Esophagus muscularis mucosa (tissue), 4 donors: ENCODE measurements at regions of chr10 and their contacts with region 1.

Region 1: GRCh38 chr10:73263948-73264347 is 11.5 kb upstream of the MRPS16 start:
- DNase-seq: no peak
- H3K4me3 ChIP-seq: no peak overlapping the region
- H3K27ac ChIP-seq: no peak overlapping the region
- H3K4me1 ChIP-seq: no peaks in the 10 kb centered on the region
- H3K27me3 ChIP-seq: no peaks in the 10 kb centered on the region
- CTCF ChIP-seq: peak; percentile 28 to 38 (median 36)
- EP300 ChIP-seq: no peak
- POLR2A ChIP-seq: no peak

Region 2: DNA sequence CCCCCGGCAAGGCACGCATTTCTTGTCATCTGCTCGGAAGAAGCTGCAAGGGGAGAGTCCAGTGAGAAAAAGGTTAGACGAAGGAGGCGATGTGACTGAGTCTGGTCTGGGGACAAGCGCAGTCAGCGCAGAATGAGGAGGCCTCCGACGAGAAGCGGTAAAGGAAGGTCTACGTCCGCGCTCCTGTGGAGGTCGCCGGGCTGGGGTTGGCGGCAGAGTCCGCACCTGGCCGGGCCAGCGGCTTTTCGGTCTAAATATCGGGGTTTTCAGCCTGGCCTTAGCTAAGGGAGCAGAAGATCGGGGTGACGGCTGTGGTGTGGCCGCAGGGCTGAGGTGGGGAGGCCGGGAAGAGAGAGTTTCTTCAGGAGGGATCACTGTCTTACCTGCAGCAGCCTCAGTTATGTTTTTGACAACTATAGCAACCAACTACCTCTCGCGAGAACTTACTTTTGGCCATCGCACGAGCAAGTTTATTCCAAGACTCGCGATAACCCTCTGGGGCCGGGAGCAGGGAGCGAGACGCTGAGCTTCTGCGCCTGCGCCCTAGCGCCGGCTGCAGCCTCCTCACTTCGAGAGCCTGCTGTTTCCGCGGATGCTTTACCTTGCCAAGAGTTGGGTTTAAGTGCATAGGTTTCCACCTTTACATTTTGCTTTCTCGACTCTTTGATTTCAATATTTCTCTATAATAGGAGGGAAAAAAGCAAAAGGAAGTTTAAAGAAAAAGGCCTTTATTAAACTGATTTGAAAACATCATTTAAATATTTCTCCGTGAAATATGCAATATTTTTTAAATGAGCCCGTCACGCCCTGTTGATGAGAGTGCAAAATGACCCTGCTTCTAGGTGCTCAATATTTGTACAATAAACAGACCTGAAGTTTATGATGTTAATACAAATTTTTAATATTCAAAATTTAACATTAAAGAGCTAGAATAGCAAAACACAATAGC is 94.7 kb after region 1 on chr10 and contains the start of gene CFAP70:
- intact Hi-C with region 1: loop called (anchors 5 kb)
- DNase-seq: peak; percentile 94
- H3K4me3 ChIP-seq: peak within 1 kb of the TSS; percentile 66 to 95 (median 78)
- H3K27ac ChIP-seq: peak within 1 kb of the TSS; percentile 61 to 75 (median 74)
- H3K4me1 ChIP-seq: peaks cover 5 to 17% (median 15%) of the 10 kb centered on the region in 4 donors
- H3K27me3 ChIP-seq: no peaks in the 10 kb centered on the region
- CTCF ChIP-seq: peak in 1 of 3 experiments; percentile 37
- EP300 ChIP-seq: no peak
- POLR2A ChIP-seq: no peak
- total RNA-seq, gene CFAP70: 0.99 to 3.3 (median 1.1) TPM

Region 3: DNA sequence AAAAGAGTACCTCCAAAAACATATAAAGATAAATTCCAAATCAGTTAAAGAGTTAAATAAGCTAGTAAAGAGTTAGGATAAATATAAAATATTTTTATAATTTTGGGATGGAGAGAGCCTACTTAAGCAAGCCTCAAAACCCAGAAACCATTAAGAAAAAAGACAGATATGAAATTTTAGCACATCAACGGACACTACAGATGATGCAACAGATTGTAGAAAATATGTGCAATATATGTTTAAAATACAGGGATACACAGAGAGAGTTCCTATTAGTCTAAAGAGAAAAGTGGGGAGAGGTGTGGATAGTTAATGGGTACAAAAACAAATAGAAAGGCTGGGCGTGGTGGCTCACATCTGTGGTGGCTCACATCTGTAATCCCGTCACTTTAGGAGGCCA is 350.8 kb after region 1 on chr10:
- intact Hi-C with region 1: no loop called
- DNase-seq: no peak
- H3K4me3 ChIP-seq: no peak overlapping the region
- H3K27ac ChIP-seq: no peak overlapping the region
- H3K4me1 ChIP-seq: no peaks in the 10 kb centered on the region
- H3K27me3 ChIP-seq: no peaks in the 10 kb centered on the region
- CTCF ChIP-seq: no peak
- EP300 ChIP-seq: no peak
- POLR2A ChIP-seq: no peak